ENCODE measurements at regions of chr4 and their contacts with region 1.

Region 1: GRCh38 chr4:187606581-187606980 is 389.0 kb upstream of the ZFP42 start:
- DNase-seq: peak in 1 of 2 donors; percentile 30
- H3K4me3 ChIP-seq: no peak overlapping the region
- H3K27ac ChIP-seq: no peak overlapping the region
- H3K4me1 ChIP-seq: peaks cover 0 to 26% (median 10%) of the 10 kb centered on the region in 4 donors
- H3K27me3 ChIP-seq: no peaks in the 10 kb centered on the region
- CTCF ChIP-seq: peak; percentile 70 to 84

Region 2: GRCh38 chr4:186946682-186947294 is 659.8 kb before region 1 on chr4:
- intact Hi-C with region 1: no loop called
- DNase-seq: no peak
- H3K4me3 ChIP-seq: no peak overlapping the region
- H3K27ac ChIP-seq: no peak overlapping the region
- H3K4me1 ChIP-seq: peaks cover 0 to 18% (median 3%) of the 10 kb centered on the region in 4 donors
- H3K27me3 ChIP-seq: no peaks in the 10 kb centered on the region
- CTCF ChIP-seq: no peak

Region 3: GRCh38 chr4:188372826-188373225 is 766.2 kb after region 1 on chr4:
- intact Hi-C with region 1: loop called (anchors 10 kb)
- DNase-seq: no peak
- H3K4me3 ChIP-seq: no peak overlapping the region
- H3K27ac ChIP-seq: no peak overlapping the region
- H3K4me1 ChIP-seq: peaks cover 0 to 14% (median 3%) of the 10 kb centered on the region in 4 donors
- H3K27me3 ChIP-seq: no peaks in the 10 kb centered on the region
- CTCF ChIP-seq: peak in 1 of 2 experiments; percentile 26